ENCODE measurements at regions of chr6 and their contacts with region 1.

Region 1: GRCh38 chr6:146041282-146041681 is 12.4 kb downstream of the GRM1 start:
- DNase-seq: no peak
- ATAC-seq: peak; percentile 74
- H3K4me3 ChIP-seq: no peak overlapping the region
- H3K27ac ChIP-seq: no peak overlapping the region
- H3K4me1 ChIP-seq: no peaks in the 10 kb centered on the region
- H3K27me3 ChIP-seq: no peaks in the 10 kb centered on the region
- CTCF ChIP-seq: peak; percentile 24 to 42 (median 42); a peak in 4 of 6 replicates
- EP300 ChIP-seq: no peak
- POLR2A ChIP-seq: no peak
- RAD21 ChIP-seq: peak; percentile 57

Region 2: DNA sequence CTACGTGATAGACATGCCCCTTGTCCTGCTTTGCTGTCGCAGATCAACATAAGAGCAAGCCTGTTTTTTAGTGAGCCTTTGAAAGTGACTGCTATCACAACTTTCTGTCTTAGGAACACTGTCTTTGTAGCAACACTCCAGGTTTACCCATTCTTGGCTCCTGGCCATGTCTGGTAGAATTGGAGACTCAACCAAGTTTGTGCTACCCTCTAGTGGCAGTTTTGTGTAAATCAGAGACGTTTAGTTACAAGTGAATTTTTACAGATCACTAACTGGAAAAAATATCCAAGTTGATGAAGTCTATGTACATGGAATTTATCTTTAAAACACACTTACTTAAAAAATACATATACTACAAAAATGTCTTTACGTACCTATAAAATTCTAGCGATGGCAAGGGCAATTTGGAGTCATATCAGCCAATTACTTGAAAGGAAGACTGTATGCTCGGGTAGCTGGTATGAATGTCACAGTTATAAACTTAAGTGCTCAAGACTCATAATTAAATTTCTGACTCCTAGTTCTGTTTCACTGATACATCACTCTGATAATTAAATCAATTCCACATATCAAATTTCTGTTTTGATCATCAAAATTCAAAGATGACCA is 658.9 kb after region 1 on chr6:
- CTCF ChIA-PET with region 1: interaction called, 6 read pairs
- POLR2A ChIA-PET with region 1: no interaction called
- RAD21 ChIA-PET with region 1: interaction called, 6 read pairs
- SMC1A ChIA-PET with region 1: interaction called, 3 read pairs
- in situ Hi-C with region 1: no loop called
- intact Hi-C with region 1: loop called (anchors 2 kb)
- DNase-seq: peak; percentile 26
- ATAC-seq: peak; percentile 71; the same call in 2 of the 3 replicates
- H3K4me3 ChIP-seq: no peak overlapping the region
- H3K27ac ChIP-seq: no peak overlapping the region
- H3K4me1 ChIP-seq: no peaks in the 10 kb centered on the region
- H3K27me3 ChIP-seq: no peaks in the 10 kb centered on the region
- CTCF ChIP-seq: peak; percentile 62 to 68 (median 67); a peak in 5 of 6 replicates
- EP300 ChIP-seq: no peak
- POLR2A ChIP-seq: no peak
- RAD21 ChIP-seq: peak; percentile 78

Measured in GM12878 (cell line).